ENCODE measurements at regions of chr5 and their contacts with region 1.

Region 1: DNA sequence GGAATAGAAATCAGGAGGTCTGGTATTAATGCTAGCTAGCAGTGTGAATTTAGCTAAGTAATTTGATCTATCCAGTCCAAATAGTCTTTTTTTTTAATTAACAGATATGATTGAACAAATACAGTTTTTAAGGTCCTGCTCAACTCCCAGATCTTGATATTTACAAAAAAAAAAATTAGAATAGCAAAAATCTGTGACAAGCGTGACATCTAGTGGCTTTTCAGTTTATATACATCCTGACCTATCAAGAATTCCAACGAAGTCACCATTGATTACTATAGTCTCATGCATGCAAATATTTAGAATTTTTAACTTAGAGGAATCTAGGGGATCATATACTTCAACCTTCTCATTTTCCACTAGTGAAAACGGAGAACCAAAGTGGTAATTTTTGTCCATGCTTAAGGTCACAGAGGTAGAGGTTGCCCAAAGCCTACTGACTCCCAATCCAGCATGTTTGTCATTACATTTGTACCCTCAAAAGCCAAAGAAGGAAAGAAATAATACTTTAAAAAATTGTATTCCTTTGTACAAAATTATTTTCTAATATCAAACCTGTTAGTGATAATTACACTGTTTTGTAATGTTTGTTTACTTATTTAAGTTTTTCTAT is 17.6 kb upstream of the TARS1 start:
- DNase-seq: no peak
- H3K4me3 ChIP-seq: no peak overlapping the region
- H3K27ac ChIP-seq: no peak overlapping the region
- H3K4me1 ChIP-seq: no peaks in the 10 kb centered on the region
- H3K27me3 ChIP-seq: no peaks in the 10 kb centered on the region
- CTCF ChIP-seq: peak; percentile 32 to 51 (median 35)
- EP300 ChIP-seq: no peak
- POLR2A ChIP-seq: no peak

Region 2: DNA sequence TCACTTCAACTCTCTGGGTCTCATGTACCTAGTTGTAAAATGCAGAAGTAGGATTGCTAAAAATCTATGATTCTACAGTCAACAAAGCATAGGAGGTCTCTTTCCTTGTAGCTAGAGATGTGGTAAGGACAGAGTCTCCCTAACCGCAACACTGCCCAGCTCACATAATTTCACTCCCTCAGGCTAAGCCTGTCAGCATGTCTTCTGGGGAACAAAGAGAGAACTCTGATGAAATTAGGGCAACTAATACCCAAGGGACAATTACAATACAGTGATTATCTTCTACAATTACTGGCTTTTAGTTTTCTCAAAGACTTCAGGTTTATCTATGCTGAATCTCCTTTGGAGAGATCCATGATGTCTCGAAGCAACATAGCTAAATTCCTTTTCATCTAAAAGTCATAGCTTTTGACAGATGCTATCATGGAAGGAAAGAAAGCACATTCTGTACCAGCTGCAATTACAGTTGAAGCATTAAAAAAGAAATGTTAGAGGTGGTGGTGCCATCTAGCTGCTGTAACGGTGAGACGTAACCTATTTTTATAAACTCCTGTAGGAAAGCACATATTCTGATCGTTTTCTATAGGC is 123.4 kb before region 1 on chr5:
- in situ Hi-C with region 1: no loop called
- intact Hi-C with region 1: loop called (anchors 10 kb)
- DNase-seq: peak; percentile 15
- H3K4me3 ChIP-seq: no peak overlapping the region
- H3K27ac ChIP-seq: peak overlapping the region; percentile 7 to 68 (median 46)
- H3K4me1 ChIP-seq: peaks cover 0 to 18% (median 10%) of the 10 kb centered on the region in 4 donors
- H3K27me3 ChIP-seq: no peaks in the 10 kb centered on the region
- CTCF ChIP-seq: peak; percentile 33 to 64 (median 41)
- EP300 ChIP-seq: no peak
- POLR2A ChIP-seq: no peak